ENCODE measurements at regions of chr20 and their contacts with region 1.

Region 1: DNA sequence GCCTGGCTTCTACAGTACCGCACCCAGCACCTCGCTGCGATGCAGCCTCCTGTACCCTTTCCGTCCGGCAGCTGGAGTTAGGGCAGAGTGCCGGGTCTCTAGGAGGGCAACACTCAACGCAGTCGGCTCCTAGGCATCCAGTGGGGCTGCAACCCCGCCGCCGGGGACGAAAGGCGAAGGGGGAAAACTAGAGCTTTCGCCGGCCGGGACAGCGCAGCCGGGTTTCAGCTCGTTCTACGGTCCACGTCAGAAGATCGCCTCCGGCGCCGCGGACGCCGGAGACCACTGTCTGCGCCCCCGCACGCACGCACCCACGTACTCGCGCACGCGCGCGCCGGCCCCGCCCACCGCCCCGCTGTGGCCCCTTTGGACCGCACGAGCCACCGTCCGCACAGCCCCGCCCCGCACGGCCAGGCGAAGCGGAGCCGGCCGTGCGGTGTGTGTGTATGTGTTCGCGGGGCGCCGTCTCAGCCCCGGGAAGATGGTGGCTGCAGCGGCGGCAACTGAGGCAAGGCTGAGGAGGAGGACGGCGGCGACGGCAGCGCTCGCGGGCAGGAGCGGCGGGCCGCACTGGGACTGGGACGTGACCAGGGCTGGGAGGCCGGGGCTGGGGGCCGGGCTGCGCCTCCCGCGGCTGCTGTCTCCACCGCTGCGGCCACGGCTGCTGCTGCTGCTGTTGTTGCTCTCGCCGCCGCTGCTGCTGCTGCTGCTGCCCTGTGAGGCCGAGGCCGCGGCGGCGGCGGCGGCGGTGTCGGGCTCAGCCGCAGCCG is at the start of gene ATRN:
- DNase-seq: peak; percentile 94
- ATAC-seq: peak; percentile 88
- H3K4me3 Mint-ChIP-seq: peak within 1 kb of the TSS; percentile 84
- H3K27ac Mint-ChIP-seq: peak within 1 kb of the TSS; percentile 66
- H3K4me1 Mint-ChIP-seq: peaks cover 26% of the 10 kb centered on the region
- H3K27me3 Mint-ChIP-seq: no peaks in the 10 kb centered on the region
- total RNA-seq, gene ATRN: 6.8 to 7.6 TPM

Region 2: DNA sequence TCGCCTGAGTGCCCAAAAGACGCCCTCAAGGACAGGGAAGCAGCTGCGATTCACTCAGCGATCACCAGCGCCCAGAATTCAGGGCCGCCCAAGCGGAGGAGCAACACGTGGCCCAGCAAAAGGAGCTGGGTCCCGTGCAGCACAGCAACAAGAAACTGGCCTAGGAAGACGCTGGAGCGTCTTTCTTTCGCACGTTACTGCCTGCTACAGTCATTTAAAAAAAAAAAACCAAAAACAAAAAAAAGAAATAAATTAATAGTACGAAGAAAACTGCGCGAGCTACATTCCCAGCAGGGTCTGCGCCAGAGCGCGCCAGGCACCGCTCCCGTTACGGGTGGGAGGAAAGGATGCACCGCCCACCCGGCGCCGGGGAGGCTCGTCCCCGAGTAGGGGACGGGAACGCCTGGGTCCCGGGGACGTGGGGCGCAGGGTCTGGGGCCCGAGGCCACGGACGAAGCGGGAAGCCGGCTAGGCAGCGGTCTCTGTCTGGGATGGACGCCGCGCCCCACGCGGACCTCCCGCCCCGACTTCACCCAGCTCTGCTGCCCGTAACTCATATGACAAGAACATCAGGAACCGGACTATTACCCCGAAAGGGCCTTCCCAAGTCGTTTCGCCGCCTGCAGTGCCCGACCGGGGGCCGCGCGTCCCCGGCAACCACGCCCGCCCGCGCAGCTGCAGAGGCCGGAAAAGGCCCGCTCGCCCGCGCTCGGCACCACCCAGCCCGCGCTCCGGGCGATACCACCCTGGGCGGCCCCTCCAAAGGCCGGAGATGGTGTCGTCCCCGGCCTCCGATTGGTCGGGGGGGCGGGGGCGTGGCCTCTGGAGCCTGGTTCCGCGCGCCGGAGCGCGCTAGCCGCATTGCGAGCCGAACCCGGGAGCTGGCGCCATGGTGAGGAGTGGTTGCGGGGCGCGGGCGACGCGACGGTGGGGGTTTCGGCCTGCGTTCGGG is 818.8 kb before region 1 on chr20 and contains the start of gene NOP56:
- CTCF ChIA-PET with region 1: no interaction called
- POLR2A ChIA-PET with region 1: no interaction called
- intact Hi-C with region 1: loop called in 1 of 2 experiments (anchors 2 kb)
- DNase-seq: peak; percentile 95
- ATAC-seq: peak; percentile 84
- H3K4me3 Mint-ChIP-seq: peak within 1 kb of the TSS; percentile 87
- H3K27ac Mint-ChIP-seq: peak within 1 kb of the TSS; percentile 90
- H3K4me1 Mint-ChIP-seq: peaks cover 40% of the 10 kb centered on the region
- H3K27me3 Mint-ChIP-seq: no peaks in the 10 kb centered on the region
- total RNA-seq, gene NOP56: 504 to 532 TPM

Region 3: DNA sequence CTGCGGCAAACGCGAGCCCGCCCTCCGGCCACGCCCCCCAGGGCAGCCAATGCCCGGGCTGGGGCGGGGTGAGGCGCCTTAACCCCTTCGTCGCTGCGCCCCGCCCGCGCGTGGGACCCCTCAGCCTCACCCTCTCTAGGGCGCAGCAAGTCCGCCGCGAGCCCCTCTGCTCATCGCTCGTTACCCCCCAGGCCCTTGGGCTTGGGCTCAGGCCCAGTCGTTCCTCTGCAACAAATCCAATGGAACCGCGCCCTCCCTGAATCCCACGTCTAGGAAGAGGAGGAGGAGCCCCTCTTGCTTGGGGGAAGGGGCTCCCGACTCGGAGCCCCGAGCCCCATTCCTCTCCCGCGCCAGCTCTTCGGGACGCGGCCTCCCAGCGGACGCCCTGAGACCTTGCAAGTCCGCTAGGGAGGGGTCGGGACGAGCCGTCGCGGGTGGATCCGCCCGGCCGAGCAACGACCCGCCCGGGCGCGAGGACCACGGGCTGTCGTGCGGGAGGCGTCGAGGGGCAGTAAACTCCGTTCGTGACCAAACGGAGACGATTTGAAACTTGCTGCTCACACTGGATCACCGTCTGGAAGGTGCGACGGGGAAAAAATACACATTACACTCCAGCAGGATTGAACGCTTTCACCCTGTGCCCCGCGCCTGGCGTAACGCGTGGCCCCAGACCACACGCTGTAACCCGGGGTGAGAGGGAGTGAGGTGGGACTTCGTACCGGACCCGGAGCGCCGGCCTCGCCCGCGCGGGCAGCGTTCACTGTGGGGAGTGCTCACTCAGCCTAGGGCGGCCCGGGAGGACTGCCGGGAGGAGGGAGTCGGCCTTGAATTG is 297.0 kb before region 1 on chr20:
- CTCF ChIA-PET with region 1: no interaction called
- POLR2A ChIA-PET with region 1: no interaction called
- intact Hi-C with region 1: loop called in 1 of 2 experiments (anchors 2 kb)
- DNase-seq: peak; percentile 94
- ATAC-seq: peak; percentile 40
- H3K4me3 Mint-ChIP-seq: peak overlapping the region; percentile 77
- H3K27ac Mint-ChIP-seq: peak overlapping the region; percentile 55
- H3K4me1 Mint-ChIP-seq: peaks cover 10% of the 10 kb centered on the region
- H3K27me3 Mint-ChIP-seq: peaks cover 19% of the 10 kb centered on the region

Region 4: DNA sequence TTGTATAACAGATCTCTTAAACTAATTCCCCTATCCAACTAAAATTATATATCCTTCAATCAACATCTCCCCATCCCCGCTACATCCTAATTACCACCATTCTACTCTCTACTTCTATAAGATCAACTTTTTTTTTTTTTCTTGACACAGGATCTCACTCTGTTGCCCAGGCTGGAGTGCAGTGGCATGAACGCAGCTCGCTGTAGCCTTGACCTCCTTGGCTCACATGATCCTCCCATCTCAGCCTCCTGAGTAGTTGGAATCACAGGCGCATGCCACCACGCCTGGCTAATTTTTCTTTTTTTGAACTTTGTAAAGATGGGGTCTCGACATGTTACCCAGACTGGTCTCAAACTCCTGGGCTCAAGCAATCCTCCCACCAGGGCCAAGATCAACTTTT is 68.4 kb before region 1 on chr20:
- CTCF ChIA-PET with region 1: no interaction called
- POLR2A ChIA-PET with region 1: no interaction called
- intact Hi-C with region 1: no loop called
- DNase-seq: no peak
- ATAC-seq: no peak
- H3K4me3 Mint-ChIP-seq: no peak overlapping the region
- H3K27ac Mint-ChIP-seq: no peak overlapping the region
- H3K4me1 Mint-ChIP-seq: peaks cover 21% of the 10 kb centered on the region
- H3K27me3 Mint-ChIP-seq: peaks cover 3% of the 10 kb centered on the region

Region 5: DNA sequence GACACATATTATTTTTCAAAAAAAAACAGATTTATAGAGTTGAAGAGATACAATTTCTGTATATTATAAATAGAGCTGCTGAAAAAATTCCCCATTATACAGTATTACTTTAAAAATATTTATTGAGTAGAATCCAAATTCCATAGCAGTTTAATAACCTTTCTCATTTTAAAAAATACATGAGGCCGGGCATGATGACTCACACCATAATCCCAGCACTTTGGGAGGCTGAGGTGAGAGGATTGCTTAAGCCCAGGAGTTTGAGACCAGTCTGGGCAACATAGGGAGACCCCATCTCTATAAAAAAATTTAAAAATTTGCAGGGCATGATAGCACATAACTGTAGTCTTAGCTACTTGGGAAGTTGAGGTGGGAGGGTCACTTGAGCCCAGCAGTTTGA is 13.0 kb after region 1 on chr20:
- CTCF ChIA-PET with region 1: interaction called, 3 read pairs
- POLR2A ChIA-PET with region 1: interaction called, 11 read pairs
- intact Hi-C with region 1: no loop called
- DNase-seq: no peak
- ATAC-seq: no peak
- H3K4me3 Mint-ChIP-seq: no peak overlapping the region
- H3K27ac Mint-ChIP-seq: no peak overlapping the region
- H3K4me1 Mint-ChIP-seq: peaks cover 25% of the 10 kb centered on the region
- H3K27me3 Mint-ChIP-seq: no peaks in the 10 kb centered on the region

Region 6: GRCh38 chr20:3502878-3503277 is 32.1 kb after region 1 on chr20:
- CTCF ChIA-PET with region 1: no interaction called
- POLR2A ChIA-PET with region 1: no interaction called
- intact Hi-C with region 1: no loop called
- DNase-seq: no peak
- ATAC-seq: no peak
- H3K4me3 Mint-ChIP-seq: no peak overlapping the region
- H3K27ac Mint-ChIP-seq: no peak overlapping the region
- H3K4me1 Mint-ChIP-seq: no peaks in the 10 kb centered on the region
- H3K27me3 Mint-ChIP-seq: no peaks in the 10 kb centered on the region

Measured in activated CD4-positive, alpha-beta T cell treated with anti-CD3 and anti-CD28 coated beads for 36 hours (primary cell).